ENCODE measurements at regions of chr4 and their contacts with region 1.

Region 1: GRCh38 chr4:61950625-61951024 is 750.5 kb downstream of the ADGRL3 start:
- DNase-seq: no peak
- H3K4me3 ChIP-seq: no peak overlapping the region
- H3K27ac ChIP-seq: no peak overlapping the region
- H3K4me1 ChIP-seq: no peaks in the 10 kb centered on the region
- H3K27me3 ChIP-seq: no peaks in the 10 kb centered on the region
- CTCF ChIP-seq: no peak
- EP300 ChIP-seq: no peak
- POLR2A ChIP-seq: no peak

Region 2: GRCh38 chr4:60344908-60345307 is 1605.7 kb before region 1 on chr4:
- in situ Hi-C with region 1: no loop called
- intact Hi-C with region 1: no loop called
- DNase-seq: no peak
- H3K4me3 ChIP-seq: no peak overlapping the region
- H3K27ac ChIP-seq: no peak overlapping the region
- H3K4me1 ChIP-seq: no peaks in the 10 kb centered on the region
- H3K27me3 ChIP-seq: no peaks in the 10 kb centered on the region
- CTCF ChIP-seq: no peak
- EP300 ChIP-seq: no peak
- POLR2A ChIP-seq: no peak

Region 3: DNA sequence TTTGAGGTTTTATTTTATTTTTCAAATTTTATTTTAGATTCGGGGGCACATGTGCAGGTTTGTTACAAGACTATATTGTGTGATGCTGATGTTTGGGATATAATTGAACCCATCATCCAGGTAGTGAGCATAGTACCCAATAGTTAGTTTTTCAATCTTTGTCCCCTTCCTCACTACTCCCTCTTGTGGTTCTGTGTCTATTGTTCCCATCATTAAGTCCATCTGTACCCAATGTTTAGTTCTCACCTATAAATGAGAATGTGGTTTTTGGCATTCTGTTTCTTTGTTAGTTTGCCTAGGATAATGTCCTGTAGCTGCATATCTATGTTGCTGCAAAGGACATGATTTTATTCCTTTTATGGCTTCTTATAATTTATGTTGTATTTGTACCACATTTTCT is 1517.7 kb before region 1 on chr4:
- in situ Hi-C with region 1: no loop called
- intact Hi-C with region 1: loop called (anchors 5 kb)
- DNase-seq: no peak
- H3K4me3 ChIP-seq: no peak overlapping the region
- H3K27ac ChIP-seq: no peak overlapping the region
- H3K4me1 ChIP-seq: no peaks in the 10 kb centered on the region
- H3K27me3 ChIP-seq: no peaks in the 10 kb centered on the region
- CTCF ChIP-seq: no peak
- EP300 ChIP-seq: no peak
- POLR2A ChIP-seq: no peak

Region 4: GRCh38 chr4:61648264-61648663 is 302.4 kb before region 1 on chr4:
- in situ Hi-C with region 1: no loop called
- intact Hi-C with region 1: no loop called
- DNase-seq: no peak
- H3K4me3 ChIP-seq: no peak overlapping the region
- H3K27ac ChIP-seq: no peak overlapping the region
- H3K4me1 ChIP-seq: no peaks in the 10 kb centered on the region
- H3K27me3 ChIP-seq: no peaks in the 10 kb centered on the region
- CTCF ChIP-seq: no peak
- EP300 ChIP-seq: no peak
- POLR2A ChIP-seq: no peak

Region 5: GRCh38 chr4:62018537-62018936 is 67.9 kb after region 1 on chr4:
- in situ Hi-C with region 1: no loop called
- intact Hi-C with region 1: no loop called
- DNase-seq: no peak
- H3K4me3 ChIP-seq: no peak overlapping the region
- H3K27ac ChIP-seq: no peak overlapping the region
- H3K4me1 ChIP-seq: no peaks in the 10 kb centered on the region
- H3K27me3 ChIP-seq: no peaks in the 10 kb centered on the region
- CTCF ChIP-seq: no peak
- EP300 ChIP-seq: no peak
- POLR2A ChIP-seq: no peak